MCF 10A (cell line): ENCODE measurements at regions of chr1 and their contacts with region 1.

Region 1: GRCh38 chr1:220281159-220281574 is 8.9 kb upstream of the RAB3GAP2 start:
- DNase-seq: peak; percentile 77
- H3K4me3 Mint-ChIP-seq: no peak overlapping the region
- H3K27ac Mint-ChIP-seq: no peak overlapping the region
- H3K4me1 Mint-ChIP-seq: no peaks in the 10 kb centered on the region
- H3K27me3 Mint-ChIP-seq: peaks cover 13% of the 10 kb centered on the region
- CTCF ChIP-seq: peak; percentile 93

Region 2: DNA sequence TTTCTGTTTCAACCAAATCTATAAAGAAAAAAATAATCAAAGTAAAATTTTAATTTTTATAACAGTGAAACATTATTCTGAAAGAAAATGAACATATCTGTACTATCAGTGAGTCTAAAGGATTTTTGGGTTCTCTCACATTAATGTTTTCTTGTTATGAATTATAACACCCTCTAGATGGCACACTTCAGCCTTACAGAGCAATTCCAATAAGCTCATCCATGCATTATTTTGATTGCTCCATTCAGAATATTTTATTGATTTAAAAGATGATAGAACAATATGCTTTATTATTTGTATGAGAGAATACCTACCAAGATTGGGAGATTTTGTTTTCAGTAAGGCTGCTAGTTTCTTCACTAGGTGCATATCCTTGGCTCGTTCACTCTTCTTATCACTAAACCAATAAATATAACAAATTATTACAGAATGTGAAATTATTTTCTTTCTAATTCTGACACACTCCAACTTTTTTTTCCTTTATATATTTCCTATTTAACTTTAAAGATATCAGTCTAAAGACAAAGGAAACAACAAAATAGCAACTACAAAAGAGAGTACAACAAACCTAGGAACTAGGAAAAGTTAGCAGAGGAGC is 91.3 kb before region 1 on chr1:
- CTCF ChIA-PET with region 1: interaction called, 10 read pairs
- POLR2A ChIA-PET with region 1: no interaction called
- intact Hi-C with region 1: no loop called
- DNase-seq: peak; percentile 64
- H3K4me3 Mint-ChIP-seq: no peak overlapping the region
- H3K27ac Mint-ChIP-seq: no peak overlapping the region
- H3K4me1 Mint-ChIP-seq: no peaks in the 10 kb centered on the region
- H3K27me3 Mint-ChIP-seq: no peaks in the 10 kb centered on the region
- CTCF ChIP-seq: peak; percentile 66

Region 3: GRCh38 chr1:220294846-220295301 is 13.7 kb after region 1 on chr1:
- CTCF ChIA-PET with region 1: interaction called, 158 read pairs
- POLR2A ChIA-PET with region 1: interaction called, 5 read pairs
- intact Hi-C with region 1: no loop called
- DNase-seq: no peak
- H3K4me3 Mint-ChIP-seq: no peak overlapping the region
- H3K27ac Mint-ChIP-seq: no peak overlapping the region
- H3K4me1 Mint-ChIP-seq: peaks cover 5% of the 10 kb centered on the region
- H3K27me3 Mint-ChIP-seq: no peaks in the 10 kb centered on the region
- CTCF ChIP-seq: no peak

Region 4: DNA sequence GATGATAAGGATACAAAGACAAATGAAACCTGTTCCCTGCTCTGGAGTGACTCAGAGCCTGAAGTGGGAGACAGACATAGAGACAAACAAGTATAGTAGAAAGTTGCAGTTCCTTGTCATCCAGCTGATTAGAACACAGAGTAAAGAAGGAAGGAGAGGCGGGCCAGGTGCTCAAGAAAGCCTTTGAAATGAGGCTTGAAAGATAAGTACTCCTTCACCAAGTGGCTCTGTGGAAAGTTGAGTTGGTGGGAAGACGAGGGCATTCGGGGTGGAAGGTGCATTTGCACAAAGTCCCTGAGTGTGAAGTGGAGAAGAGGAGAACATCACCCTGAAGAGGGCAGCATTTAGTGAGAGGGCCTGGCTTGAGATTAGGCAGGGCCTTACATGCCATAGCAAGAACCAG is 263.7 kb after region 1 on chr1:
- CTCF ChIA-PET with region 1: interaction called, 10 read pairs
- POLR2A ChIA-PET with region 1: no interaction called
- intact Hi-C with region 1: no loop called
- DNase-seq: peak; percentile 61
- H3K4me3 Mint-ChIP-seq: no peak overlapping the region
- H3K27ac Mint-ChIP-seq: no peak overlapping the region
- H3K4me1 Mint-ChIP-seq: no peaks in the 10 kb centered on the region
- H3K27me3 Mint-ChIP-seq: no peaks in the 10 kb centered on the region
- CTCF ChIP-seq: peak; percentile 19

Region 5: GRCh38 chr1:220669005-220669404 is 387.8 kb after region 1 on chr1:
- CTCF ChIA-PET with region 1: interaction called, 17 read pairs
- POLR2A ChIA-PET with region 1: no interaction called
- intact Hi-C with region 1: no loop called
- DNase-seq: no peak
- H3K4me3 Mint-ChIP-seq: no peak overlapping the region
- H3K27ac Mint-ChIP-seq: no peak overlapping the region
- H3K4me1 Mint-ChIP-seq: no peaks in the 10 kb centered on the region
- H3K27me3 Mint-ChIP-seq: no peaks in the 10 kb centered on the region
- CTCF ChIP-seq: no peak

Region 6: DNA sequence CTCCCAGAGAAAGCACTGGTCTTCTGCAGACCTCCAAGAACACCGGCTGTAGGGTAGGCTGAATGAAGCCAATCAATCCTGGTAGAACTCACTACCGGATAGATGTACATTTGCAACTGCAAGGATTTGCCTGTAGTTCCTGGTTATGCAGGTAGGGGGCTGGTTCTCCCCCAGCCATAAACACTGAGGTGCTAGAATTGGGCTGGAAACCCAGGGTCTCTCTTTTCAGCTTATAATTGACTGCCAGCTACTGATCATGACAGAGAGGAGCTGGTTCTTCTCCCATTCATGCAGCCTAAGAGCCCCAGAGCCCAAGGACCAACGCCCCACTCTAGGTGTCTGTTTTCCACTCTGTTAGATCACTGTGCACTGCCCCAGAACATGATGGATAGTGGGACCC is 445.5 kb after region 1 on chr1:
- CTCF ChIA-PET with region 1: interaction called, 18 read pairs
- POLR2A ChIA-PET with region 1: interaction called, 3 read pairs
- intact Hi-C with region 1: no loop called
- DNase-seq: no peak
- H3K4me3 Mint-ChIP-seq: no peak overlapping the region
- H3K27ac Mint-ChIP-seq: no peak overlapping the region
- H3K4me1 Mint-ChIP-seq: peaks cover 2% of the 10 kb centered on the region
- H3K27me3 Mint-ChIP-seq: no peaks in the 10 kb centered on the region
- CTCF ChIP-seq: peak; percentile 49

Region 7: DNA sequence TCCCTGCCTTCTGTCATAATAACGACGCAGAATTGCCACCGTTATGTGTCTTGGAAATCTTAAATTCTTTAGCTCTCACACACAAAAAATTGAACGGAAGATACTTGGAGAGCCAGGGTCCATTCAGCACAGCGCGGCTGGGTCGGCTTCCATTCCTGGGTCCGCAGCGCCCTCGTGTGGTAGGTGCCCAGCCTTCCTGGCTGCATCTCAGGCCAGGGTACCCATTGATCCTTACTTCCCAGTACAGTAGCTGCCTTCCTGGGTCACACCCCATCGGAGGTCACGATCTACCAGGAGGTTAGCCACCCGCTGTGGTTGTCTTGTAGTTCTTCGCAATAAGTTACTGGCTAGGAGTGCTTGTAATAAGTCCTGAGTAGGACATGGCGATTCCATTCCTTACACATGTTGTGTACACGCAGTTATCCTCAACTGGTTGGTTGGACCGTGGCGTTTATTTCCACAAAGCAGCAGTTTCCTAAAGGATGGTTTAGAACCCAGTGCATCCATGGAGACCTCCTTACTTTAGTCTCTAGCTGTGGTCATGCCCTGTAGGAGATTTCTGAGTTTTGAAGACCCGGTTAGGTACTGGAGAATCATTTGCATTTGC is 495.7 kb after region 1 on chr1:
- CTCF ChIA-PET with region 1: interaction called, 329 read pairs
- POLR2A ChIA-PET with region 1: interaction called, 8 read pairs
- intact Hi-C with region 1: loop called (anchors 1 kb)
- DNase-seq: peak; percentile 88
- H3K4me3 Mint-ChIP-seq: no peak overlapping the region
- H3K27ac Mint-ChIP-seq: no peak overlapping the region
- H3K4me1 Mint-ChIP-seq: no peaks in the 10 kb centered on the region
- H3K27me3 Mint-ChIP-seq: no peaks in the 10 kb centered on the region
- CTCF ChIP-seq: peak; percentile 99